B cell (primary cell): ENCODE measurements at regions of chr6 and their contacts with region 1.

Region 1: DNA sequence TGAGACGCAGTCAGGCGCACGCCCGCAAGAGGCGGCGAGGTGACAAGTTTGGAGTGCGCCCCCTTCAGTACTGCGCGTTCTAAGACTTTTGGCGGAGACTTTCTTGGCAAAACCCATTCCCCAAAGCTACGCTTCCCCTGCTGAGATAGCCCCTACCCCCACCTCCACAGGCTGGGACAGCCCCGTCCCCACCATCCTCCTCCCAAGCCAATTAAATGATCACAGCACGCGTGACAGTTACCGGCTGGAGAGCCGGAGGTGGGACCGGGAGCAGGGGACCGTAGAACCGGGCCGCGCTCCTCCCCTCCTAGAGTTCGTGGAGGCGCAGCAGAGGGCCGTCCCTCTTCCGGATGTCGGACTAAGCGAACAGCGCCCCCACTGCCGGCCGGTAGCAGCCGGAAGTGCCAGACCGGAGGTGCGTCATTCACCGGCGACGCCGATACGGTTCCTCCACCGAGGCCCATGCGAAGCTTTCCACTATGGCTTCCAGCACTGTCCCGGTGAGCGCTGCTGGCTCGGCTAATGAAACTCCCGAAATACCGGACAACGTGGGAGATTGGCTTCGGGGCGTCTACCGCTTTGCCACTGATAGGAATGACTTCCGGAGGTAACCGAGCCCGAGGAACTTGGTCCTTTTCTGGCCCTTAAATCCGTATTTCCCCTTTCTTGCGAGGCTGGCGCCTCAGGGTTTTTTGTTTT is at the start of gene TOMM6:
- DNase-seq: peak; percentile 98
- ATAC-seq: peak; percentile 84
- H3K4me3 ChIP-seq: peak within 1 kb of the TSS; percentile 85 to 99 (median 91)
- H3K4me3 Mint-ChIP-seq: peak within 1 kb of the TSS; percentile 97
- H3K27ac ChIP-seq: peak within 1 kb of the TSS; percentile 75 to 95
- H3K27ac Mint-ChIP-seq: peak within 1 kb of the TSS; percentile 98
- H3K4me1 ChIP-seq: peaks cover 17 to 27% of the 10 kb centered on the region in 2 donors
- H3K4me1 Mint-ChIP-seq: peaks cover 32% of the 10 kb centered on the region
- H3K27me3 ChIP-seq: no peaks in the 10 kb centered on the region
- H3K27me3 Mint-ChIP-seq: no peaks in the 10 kb centered on the region
- CTCF ChIP-seq: peak; percentile 85
- total RNA-seq, gene TOMM6: 117 and 130 TPM in 2 replicates

Region 2: DNA sequence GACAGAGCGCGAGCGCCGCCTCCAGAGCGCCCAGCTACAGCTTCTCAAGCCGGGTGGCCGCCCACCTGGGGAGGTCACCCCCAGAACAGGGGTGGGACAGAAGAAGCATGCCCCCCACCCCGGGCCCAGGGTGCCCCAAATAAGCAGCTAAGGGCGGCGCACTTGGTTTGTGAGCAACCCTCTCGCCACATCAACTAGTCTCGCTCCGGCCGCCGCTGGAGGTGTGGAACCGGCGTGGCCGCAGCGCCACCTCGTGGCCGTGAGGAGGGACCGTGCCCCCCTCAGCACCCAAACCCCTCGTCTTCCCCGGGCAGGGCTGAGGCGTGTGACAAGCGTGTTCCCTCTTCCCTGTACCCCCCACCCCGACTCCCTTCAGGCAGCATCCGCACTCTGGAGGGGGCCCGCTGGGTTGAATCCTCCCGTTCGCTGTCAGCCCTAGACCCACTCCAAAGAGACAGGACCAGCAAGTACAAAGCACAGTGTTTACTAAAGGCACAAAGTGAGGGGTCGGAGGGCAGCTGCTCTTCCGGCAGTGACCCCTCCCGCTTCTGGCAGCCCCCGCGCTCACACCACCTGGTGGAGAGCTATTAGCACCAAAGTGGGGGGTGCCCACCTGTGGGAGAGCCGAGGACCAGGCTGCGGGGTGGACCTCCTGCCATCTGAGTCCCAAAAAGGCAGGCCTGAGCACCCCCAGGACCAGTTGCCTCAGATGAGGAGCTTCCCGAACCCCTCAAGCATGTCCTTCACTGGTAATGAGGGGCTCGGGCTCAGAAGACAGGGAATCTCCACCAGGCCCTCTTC is 103.7 kb before region 1 on chr6:
- CTCF ChIA-PET with region 1: interaction called, 4 read pairs
- POLR2A ChIA-PET with region 1: interaction called, 5 read pairs
- intact Hi-C with region 1: loop called (anchors 2 kb)
- DNase-seq: peak; percentile 88
- ATAC-seq: peak; percentile 82
- H3K4me3 ChIP-seq: peak overlapping the region in 4 of 5 experiments; percentile 51 to 57 (median 52)
- H3K4me3 Mint-ChIP-seq: peak overlapping the region; percentile 66
- H3K27ac ChIP-seq: peak overlapping the region; percentile 29 to 46
- H3K27ac Mint-ChIP-seq: peak overlapping the region; percentile 86
- H3K4me1 ChIP-seq: peaks cover 9 to 26% of the 10 kb centered on the region in 2 donors
- H3K4me1 Mint-ChIP-seq: peaks cover 23% of the 10 kb centered on the region
- H3K27me3 ChIP-seq: no peaks in the 10 kb centered on the region
- H3K27me3 Mint-ChIP-seq: no peaks in the 10 kb centered on the region
- CTCF ChIP-seq: peak; percentile 90

Region 3: GRCh38 chr6:41801380-41801779 is 14.0 kb after region 1 on chr6:
- CTCF ChIA-PET with region 1: interaction called, 20 read pairs
- POLR2A ChIA-PET with region 1: no interaction called
- intact Hi-C with region 1: no loop called
- DNase-seq: no peak
- ATAC-seq: no peak
- H3K4me3 ChIP-seq: no peak overlapping the region
- H3K4me3 Mint-ChIP-seq: no peak overlapping the region
- H3K27ac ChIP-seq: no peak overlapping the region
- H3K27ac Mint-ChIP-seq: no peak overlapping the region
- H3K4me1 ChIP-seq: no peaks in the 10 kb centered on the region
- H3K4me1 Mint-ChIP-seq: no peaks in the 10 kb centered on the region
- H3K27me3 ChIP-seq: no peaks in the 10 kb centered on the region
- H3K27me3 Mint-ChIP-seq: no peaks in the 10 kb centered on the region
- CTCF ChIP-seq: no peak

Region 4: GRCh38 chr6:41821266-41821665 is 33.9 kb after region 1 on chr6:
- CTCF ChIA-PET with region 1: no interaction called
- POLR2A ChIA-PET with region 1: no interaction called
- intact Hi-C with region 1: no loop called
- DNase-seq: no peak
- ATAC-seq: no peak
- H3K4me3 ChIP-seq: no peak overlapping the region
- H3K4me3 Mint-ChIP-seq: no peak overlapping the region
- H3K27ac ChIP-seq: no peak overlapping the region
- H3K27ac Mint-ChIP-seq: no peak overlapping the region
- H3K4me1 ChIP-seq: no peaks in the 10 kb centered on the region
- H3K4me1 Mint-ChIP-seq: no peaks in the 10 kb centered on the region
- H3K27me3 ChIP-seq: no peaks in the 10 kb centered on the region
- H3K27me3 Mint-ChIP-seq: no peaks in the 10 kb centered on the region
- CTCF ChIP-seq: no peak

Region 5: GRCh38 chr6:41941280-41942066 is 154.1 kb after region 1 on chr6 and contains the start of gene CCND3:
- CTCF ChIA-PET with region 1: interaction called, 7 read pairs
- POLR2A ChIA-PET with region 1: no interaction called
- intact Hi-C with region 1: loop called (anchors 2 kb)
- DNase-seq: peak; percentile 87
- ATAC-seq: peak; percentile 94
- H3K4me3 ChIP-seq: peak within 1 kb of the TSS; percentile 61 to 77 (median 71)
- H3K4me3 Mint-ChIP-seq: peak within 1 kb of the TSS; percentile 85
- H3K27ac ChIP-seq: peak within 1 kb of the TSS; percentile 10 to 68
- H3K27ac Mint-ChIP-seq: peak within 1 kb of the TSS; percentile 87
- H3K4me1 ChIP-seq: peaks cover 51 to 58% of the 10 kb centered on the region in 2 donors
- H3K4me1 Mint-ChIP-seq: peaks cover 52% of the 10 kb centered on the region
- H3K27me3 ChIP-seq: no peaks in the 10 kb centered on the region
- H3K27me3 Mint-ChIP-seq: no peaks in the 10 kb centered on the region
- CTCF ChIP-seq: no peak
- total RNA-seq, gene CCND3: 136 and 145 TPM in 2 replicates

Region 6: DNA sequence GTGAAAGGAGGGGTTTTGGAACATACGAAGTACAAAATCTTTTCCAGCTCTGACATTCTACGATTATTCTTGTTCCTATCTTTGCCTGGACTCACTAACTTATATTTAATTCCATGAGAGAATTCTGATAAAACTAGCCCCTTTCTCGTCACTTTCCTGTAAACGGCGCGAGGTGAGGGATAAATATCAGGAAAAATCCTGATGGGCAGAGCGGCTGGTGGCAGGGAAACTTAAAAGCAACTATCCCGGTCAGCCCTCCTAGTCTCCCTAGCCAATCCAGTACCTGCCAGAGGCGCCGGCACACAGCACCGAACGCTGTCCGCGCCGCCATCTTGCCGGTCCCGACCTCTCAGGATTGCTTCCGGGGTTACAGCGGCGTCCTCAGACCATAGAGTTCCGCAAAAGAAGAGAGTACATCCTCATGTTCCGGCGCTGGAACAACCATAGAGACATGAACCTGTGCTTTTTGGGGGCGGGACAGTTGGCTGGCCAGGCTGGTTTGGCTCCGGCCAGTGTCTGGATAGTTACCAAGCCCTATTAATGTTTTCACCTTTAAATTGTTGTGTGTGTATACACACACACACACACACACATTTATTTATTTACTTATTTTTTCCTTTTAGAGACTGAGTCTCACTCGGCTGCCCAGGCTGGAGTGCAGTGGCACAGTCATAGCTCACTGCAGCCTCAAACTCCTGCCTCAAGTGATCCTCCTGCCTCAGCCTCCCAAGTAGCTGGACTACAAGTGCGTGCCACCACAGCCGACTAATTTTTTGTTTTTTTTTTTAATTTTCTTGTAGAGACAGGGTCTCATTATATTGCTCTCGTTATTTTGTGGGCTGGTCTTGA is 430.4 kb after region 1 on chr6 and contains the start of gene MRPS10:
- CTCF ChIA-PET with region 1: interaction called, 5 read pairs
- POLR2A ChIA-PET with region 1: interaction called, 6 read pairs
- intact Hi-C with region 1: loop called (anchors 1 kb)
- DNase-seq: peak; percentile 92
- ATAC-seq: peak; percentile 99
- H3K4me3 ChIP-seq: peak within 1 kb of the TSS; percentile 76 to 98 (median 86)
- H3K4me3 Mint-ChIP-seq: peak within 1 kb of the TSS; percentile 99
- H3K27ac ChIP-seq: peak within 1 kb of the TSS; percentile 58 to 76
- H3K27ac Mint-ChIP-seq: peak within 1 kb of the TSS; percentile 98
- H3K4me1 ChIP-seq: peaks cover 7 to 14% of the 10 kb centered on the region in 2 donors
- H3K4me1 Mint-ChIP-seq: peaks cover 23% of the 10 kb centered on the region
- H3K27me3 ChIP-seq: no peaks in the 10 kb centered on the region
- H3K27me3 Mint-ChIP-seq: peaks cover 4% of the 10 kb centered on the region
- CTCF ChIP-seq: no peak
- total RNA-seq, gene MRPS10: 26.4 and 28.6 TPM in 2 replicates

Region 7: GRCh38 chr6:42879372-42880239 is 1092.2 kb after region 1 on chr6 and contains the start of gene RPL7L1:
- CTCF ChIA-PET with region 1: no interaction called
- POLR2A ChIA-PET with region 1: no interaction called
- intact Hi-C with region 1: loop called (anchors 2 kb)
- DNase-seq: peak; percentile 93
- ATAC-seq: peak; percentile 95
- H3K4me3 ChIP-seq: peak within 1 kb of the TSS; percentile 76 to 99 (median 90)
- H3K4me3 Mint-ChIP-seq: peak within 1 kb of the TSS; percentile 96
- H3K27ac ChIP-seq: peak within 1 kb of the TSS; percentile 85 to 87
- H3K27ac Mint-ChIP-seq: peak within 1 kb of the TSS; percentile 97
- H3K4me1 ChIP-seq: peaks cover 8 to 18% of the 10 kb centered on the region in 2 donors
- H3K4me1 Mint-ChIP-seq: peaks cover 21% of the 10 kb centered on the region
- H3K27me3 ChIP-seq: no peaks in the 10 kb centered on the region
- H3K27me3 Mint-ChIP-seq: no peaks in the 10 kb centered on the region
- CTCF ChIP-seq: no peak
- total RNA-seq, gene RPL7L1: 95.9 and 100 TPM in 2 replicates